Thyroid gland (tissue), 4 donors: ENCODE measurements at regions of chr3 and their contacts with region 1.

Region 1: GRCh38 chr3:13657660-13658435 is 108.9 kb downstream of the FBLN2 start:
- DNase-seq: peak; percentile 32 to 52
- H3K4me3 ChIP-seq: no peak overlapping the region
- H3K27ac ChIP-seq: no peak overlapping the region
- H3K4me1 ChIP-seq: peaks cover 0 to 7% of the 10 kb centered on the region in 2 donors
- H3K27me3 ChIP-seq: no peaks in the 10 kb centered on the region
- CTCF ChIP-seq: peak in 5 of 6 experiments; percentile 40 to 86 (median 64)
- POLR2A ChIP-seq: no peak

Region 2: DNA sequence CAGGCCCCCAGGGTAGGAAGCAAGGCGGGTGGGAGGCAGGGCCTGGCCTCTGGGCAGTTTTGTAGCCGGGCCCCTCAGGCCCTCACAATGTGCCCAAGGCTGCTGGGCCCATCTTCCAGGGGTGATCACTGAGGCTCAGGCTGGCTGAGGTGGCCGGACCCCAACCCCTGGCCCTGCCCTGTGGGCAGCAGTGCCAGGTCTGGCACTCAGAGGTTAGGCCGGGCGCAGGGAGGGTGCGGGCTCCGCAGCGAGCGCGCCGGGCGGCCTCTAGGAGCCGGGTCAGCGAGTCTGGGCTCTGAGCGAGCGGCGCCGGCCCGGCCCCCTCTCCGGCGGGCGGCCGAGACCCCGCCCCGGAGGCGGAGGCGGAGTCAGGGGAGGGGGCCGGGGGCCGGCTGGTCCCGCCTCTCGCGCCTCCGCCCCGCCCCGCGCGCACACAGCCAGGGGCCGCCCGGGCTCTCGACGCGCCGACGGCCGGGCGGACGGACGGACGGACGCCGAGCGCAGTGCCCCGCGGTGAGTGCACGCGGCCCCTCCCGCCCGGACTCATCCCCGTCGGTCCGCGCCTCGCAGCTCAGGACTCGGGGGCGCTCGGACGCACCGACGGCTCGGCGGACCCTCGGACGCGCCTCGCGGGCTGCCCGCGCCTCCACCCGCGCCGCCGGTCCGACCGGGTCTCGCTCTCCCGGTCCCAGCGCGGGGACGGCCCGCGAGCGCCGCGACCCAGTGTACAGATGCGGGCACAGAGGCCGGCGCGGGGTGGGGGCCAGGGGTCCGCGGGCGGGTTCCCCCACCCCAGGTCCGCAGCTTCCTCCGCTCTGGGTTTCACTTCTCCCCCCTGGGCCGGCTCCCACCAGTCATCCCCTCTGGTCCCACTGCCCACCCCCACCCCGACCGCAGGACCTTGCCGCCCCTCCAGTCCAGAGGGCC is 108.9 kb before region 1 on chr3 and contains the start of gene FBLN2:
- intact Hi-C with region 1: no loop called
- DNase-seq: peak; percentile 36 to 47
- H3K4me3 ChIP-seq: peak within 1 kb of the TSS in 1 of 3 donors; percentile 32
- H3K27ac ChIP-seq: peak within 1 kb of the TSS; percentile 29 to 58 (median 54)
- H3K4me1 ChIP-seq: peaks cover 0 to 12% of the 10 kb centered on the region in 2 donors
- H3K27me3 ChIP-seq: no peaks in the 10 kb centered on the region
- CTCF ChIP-seq: no peak
- POLR2A ChIP-seq: peak in 1 of 2 donors; percentile 49
- total RNA-seq, gene FBLN2: 75.7 to 159 (median 89.8) TPM

Region 3: GRCh38 chr3:13884851-13885703 is 227.2 kb after region 1 on chr3:
- intact Hi-C with region 1: loop called (anchors 5 kb)
- DNase-seq: peak; percentile 72 to 73
- H3K4me3 ChIP-seq: no peak overlapping the region
- H3K27ac ChIP-seq: no peak overlapping the region
- H3K4me1 ChIP-seq: peaks cover 7 to 8% of the 10 kb centered on the region in 2 donors
- H3K27me3 ChIP-seq: no peaks in the 10 kb centered on the region
- CTCF ChIP-seq: peak in 5 of 6 experiments; percentile 53 to 84 (median 71)
- POLR2A ChIP-seq: no peak